ENCODE measurements at regions of chr19 and their contacts with region 1.

Region 1: GRCh38 chr19:28242297-28242927 is 970.5 kb downstream of the UQCRFS1 start:
- DNase-seq: no peak
- ATAC-seq: peak; percentile 72; the same call in 1 of the 2 replicates
- H3K4me3 ChIP-seq: no peak overlapping the region
- H3K27ac ChIP-seq: no peak overlapping the region
- H3K4me1 ChIP-seq: no peaks in the 10 kb centered on the region
- H3K27me3 ChIP-seq: no peaks in the 10 kb centered on the region
- CTCF ChIP-seq: peak; percentile 87

Region 2: DNA sequence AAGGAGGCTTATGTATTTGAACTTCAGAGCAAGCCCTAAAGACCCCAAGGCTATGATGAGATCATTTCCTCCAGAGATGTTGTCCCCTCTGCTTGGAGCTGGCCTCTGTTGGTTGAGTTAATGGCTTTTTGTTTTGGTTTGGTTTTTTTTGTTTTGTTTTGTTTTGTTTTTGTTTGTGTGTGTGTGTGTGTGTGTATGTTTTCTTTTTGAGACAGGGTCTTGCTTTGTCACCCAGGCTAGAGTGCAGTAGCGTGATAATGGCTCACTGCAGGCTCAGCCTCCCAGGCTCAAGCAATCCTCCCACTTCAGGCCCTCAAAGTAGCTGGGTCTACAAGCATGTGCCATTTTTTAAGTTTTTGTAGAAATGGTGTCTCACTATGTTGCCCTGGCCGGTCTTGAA is 105.6 kb before region 1 on chr19:
- CTCF ChIA-PET with region 1: no interaction called
- POLR2A ChIA-PET with region 1: no interaction called
- in situ Hi-C with region 1: no loop called
- intact Hi-C with region 1: no loop called
- DNase-seq: no peak
- ATAC-seq: no peak
- H3K4me3 ChIP-seq: no peak overlapping the region
- H3K27ac ChIP-seq: no peak overlapping the region
- H3K4me1 ChIP-seq: no peaks in the 10 kb centered on the region
- H3K27me3 ChIP-seq: 0 out of 2 replicates have a peak, but pooled peaks cover 2% of the 10 kb centered on the region
- CTCF ChIP-seq: no peak

Region 3: GRCh38 chr19:28710278-28710677 is 467.9 kb after region 1 on chr19:
- CTCF ChIA-PET with region 1: no interaction called
- POLR2A ChIA-PET with region 1: no interaction called
- in situ Hi-C with region 1: no loop called
- intact Hi-C with region 1: loop called (anchors 10 kb)
- DNase-seq: peak; percentile 72
- ATAC-seq: peak; percentile 76; the same call in 1 of the 2 replicates
- H3K4me3 ChIP-seq: no peak overlapping the region
- H3K27ac ChIP-seq: no peak overlapping the region
- H3K4me1 ChIP-seq: no peaks in the 10 kb centered on the region
- H3K27me3 ChIP-seq: no peaks in the 10 kb centered on the region
- CTCF ChIP-seq: peak; percentile 72; the same call in 1 of the 2 replicates

Measured in Panc1 (cell line).